ENCODE measurements at regions of chr19 and their contacts with region 1.

Region 1: DNA sequence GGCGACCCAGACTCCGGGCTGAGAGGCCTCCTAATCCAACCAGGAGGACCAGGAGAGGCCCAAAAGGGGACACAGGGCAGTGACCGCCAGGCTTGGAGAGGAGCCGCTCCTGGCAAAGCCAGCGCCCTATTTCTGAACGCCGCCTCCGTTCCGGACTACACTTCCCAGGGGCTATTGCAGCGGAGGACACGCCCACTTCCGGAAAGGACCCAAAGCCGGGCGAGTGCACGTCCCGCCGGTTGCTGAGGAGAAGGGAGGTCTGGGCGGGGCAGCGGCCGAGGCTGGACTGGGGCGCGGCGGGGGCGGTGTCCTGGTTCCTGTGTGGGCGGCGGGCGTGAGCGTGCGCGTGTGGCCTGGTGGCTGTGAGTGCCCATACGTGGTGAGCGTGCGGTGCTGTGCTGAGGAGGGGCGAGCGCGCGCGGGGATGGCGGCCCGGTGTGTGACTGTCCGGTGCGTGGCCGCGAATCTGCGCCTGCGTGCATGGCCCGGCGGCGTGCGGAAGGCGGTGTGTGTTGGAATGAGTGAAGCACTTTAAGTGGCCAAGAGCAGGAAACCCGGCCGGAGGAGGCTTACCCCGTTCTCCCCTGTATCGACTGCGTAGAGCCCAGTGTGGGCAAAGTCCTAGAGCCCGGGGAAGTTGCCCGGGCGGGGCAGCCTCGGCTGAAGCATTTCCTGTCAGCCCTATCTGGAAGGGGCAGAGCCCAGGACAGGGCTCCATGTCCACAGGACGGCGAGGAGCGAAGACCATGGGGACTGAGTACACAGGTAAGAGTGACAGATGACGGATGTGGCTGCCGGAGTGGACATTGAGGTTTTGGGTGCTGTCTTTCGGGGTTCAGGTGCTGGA is at the start of gene ZNF470:
- DNase-seq: peak; percentile 85 to 90
- ATAC-seq: peak; percentile 96 to 97 (median 96)
- H3K4me3 ChIP-seq: peak within 1 kb of the TSS; percentile 95
- H3K4me3 Mint-ChIP-seq: peak within 1 kb of the TSS; percentile 92
- H3K27ac ChIP-seq: peak within 1 kb of the TSS; percentile 82
- H3K27ac Mint-ChIP-seq: peak within 1 kb of the TSS; percentile 83 to 92
- H3K4me1 ChIP-seq: peaks cover 13% of the 10 kb centered on the region
- H3K4me1 Mint-ChIP-seq: peaks cover 13% of the 10 kb centered on the region in 2 donors
- H3K27me3 ChIP-seq: no peaks in the 10 kb centered on the region
- H3K27me3 Mint-ChIP-seq: no peaks in the 10 kb centered on the region
- CTCF ChIP-seq: no peak
- total RNA-seq, gene ZNF470: 2.0 to 2.3 (median 2.1) TPM

Region 2: DNA sequence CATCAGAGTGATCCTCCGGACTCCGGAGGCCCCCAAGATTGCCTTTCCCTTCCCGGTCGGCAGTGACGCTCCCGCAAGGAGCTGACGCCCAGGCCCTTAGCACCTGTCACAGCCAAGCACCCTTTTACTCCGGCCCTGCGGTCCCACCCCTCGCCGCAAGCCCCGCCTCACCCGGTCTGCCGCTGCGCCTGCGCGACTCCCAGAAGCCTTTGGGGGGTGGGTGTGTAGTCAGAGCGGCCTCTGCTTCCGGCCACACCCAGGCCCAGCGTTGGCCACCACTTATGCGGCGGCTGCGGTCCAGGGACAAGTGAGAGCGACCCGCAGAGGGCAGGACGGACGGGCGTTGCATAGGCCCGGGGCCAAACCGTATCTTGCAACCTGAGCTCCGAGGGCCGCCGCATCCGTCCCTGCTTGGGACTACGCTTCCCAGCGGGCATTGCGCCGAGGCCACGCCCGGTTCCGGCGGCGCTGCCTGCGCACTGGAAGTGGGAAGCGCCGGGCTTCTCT is 29.2 kb before region 1 on chr19:
- intact Hi-C with region 1: loop called (anchors 1 kb)
- DNase-seq: peak; percentile 88 to 91
- ATAC-seq: peak; percentile 89 to 92 (median 90)
- H3K4me3 ChIP-seq: peak overlapping the region; percentile 64
- H3K4me3 Mint-ChIP-seq: peak overlapping the region; percentile 91
- H3K27ac ChIP-seq: peak overlapping the region; percentile 80
- H3K27ac Mint-ChIP-seq: peak overlapping the region; percentile 80 to 95
- H3K4me1 ChIP-seq: peaks cover 19% of the 10 kb centered on the region
- H3K4me1 Mint-ChIP-seq: peaks cover 20 to 36% of the 10 kb centered on the region in 2 donors
- H3K27me3 ChIP-seq: no peaks in the 10 kb centered on the region
- H3K27me3 Mint-ChIP-seq: peaks cover 0 to 2% of the 10 kb centered on the region in 2 donors
- CTCF ChIP-seq: no peak

Region 3: GRCh38 chr19:56554272-56554869 is 13.1 kb before region 1 on chr19:
- intact Hi-C with region 1: no loop called
- DNase-seq: no peak
- ATAC-seq: no peak
- H3K4me3 ChIP-seq: no peak overlapping the region
- H3K4me3 Mint-ChIP-seq: no peak overlapping the region
- H3K27ac ChIP-seq: no peak overlapping the region
- H3K27ac Mint-ChIP-seq: no peak overlapping the region
- H3K4me1 ChIP-seq: no peaks in the 10 kb centered on the region
- H3K4me1 Mint-ChIP-seq: no peaks in the 10 kb centered on the region
- H3K27me3 ChIP-seq: no peaks in the 10 kb centered on the region
- H3K27me3 Mint-ChIP-seq: no peaks in the 10 kb centered on the region
- CTCF ChIP-seq: no peak

Region 4: GRCh38 chr19:56594783-56595547 is 27.5 kb after region 1 on chr19 and contains the start of gene ZNF71:
- intact Hi-C with region 1: loop called (anchors 1 kb)
- DNase-seq: peak; percentile 81 to 89
- ATAC-seq: peak; percentile 89 to 97 (median 96)
- H3K4me3 ChIP-seq: peak within 1 kb of the TSS; percentile 54
- H3K4me3 Mint-ChIP-seq: peak within 1 kb of the TSS; percentile 85
- H3K27ac ChIP-seq: peak within 1 kb of the TSS; percentile 62
- H3K27ac Mint-ChIP-seq: peak within 1 kb of the TSS; percentile 67 to 82
- H3K4me1 ChIP-seq: peaks cover 17% of the 10 kb centered on the region
- H3K4me1 Mint-ChIP-seq: peaks cover 19 to 31% of the 10 kb centered on the region in 2 donors
- H3K27me3 ChIP-seq: peaks cover 4% of the 10 kb centered on the region
- H3K27me3 Mint-ChIP-seq: peaks cover 7 to 25% of the 10 kb centered on the region in 2 donors
- CTCF ChIP-seq: no peak
- total RNA-seq, gene ZNF71: 5.0 to 7.4 (median 7.2) TPM